Activated CD4-positive, alpha-beta T cell treated with anti-CD3 and anti-CD28 coated beads, Interleukin-2, amount 10 ng/mL, durations not matched to agents 24 days and 14 days (primary cell): ENCODE measurements at regions of chr12 and their contacts with region 1.

Region 1: GRCh38 chr12:121351820-121352681 is at the start of gene ANAPC5:
- DNase-seq: peak; percentile 97
- H3K4me3 Mint-ChIP-seq: peak within 1 kb of the TSS; percentile 96
- H3K27ac Mint-ChIP-seq: peak within 1 kb of the TSS; percentile 98
- H3K4me1 Mint-ChIP-seq: peaks cover 24% of the 10 kb centered on the region
- H3K27me3 Mint-ChIP-seq: peaks cover 3% of the 10 kb centered on the region
- total RNA-seq, gene ANAPC5: 151 and 154 TPM in 2 replicates

Region 2: GRCh38 chr12:121296618-121297434 is 55.2 kb before region 1 on chr12 and contains the start of gene CAMKK2:
- intact Hi-C with region 1: loop called (anchors 2 kb)
- DNase-seq: peak; percentile 98
- H3K4me3 Mint-ChIP-seq: peak within 1 kb of the TSS; percentile 93
- H3K27ac Mint-ChIP-seq: peak within 1 kb of the TSS; percentile 87
- H3K4me1 Mint-ChIP-seq: peaks cover 22% of the 10 kb centered on the region
- H3K27me3 Mint-ChIP-seq: no peaks in the 10 kb centered on the region
- total RNA-seq, gene CAMKK2: 37.4 and 38.2 TPM in 2 replicates

Region 3: GRCh38 chr12:121399391-121400331 is 47.6 kb after region 1 on chr12 and contains the start of gene RNF34:
- intact Hi-C with region 1: loop called (anchors 1 kb)
- DNase-seq: peak; percentile 99
- H3K4me3 Mint-ChIP-seq: peak within 1 kb of the TSS; percentile 95
- H3K27ac Mint-ChIP-seq: peak within 1 kb of the TSS; percentile 98
- H3K4me1 Mint-ChIP-seq: peaks cover 24% of the 10 kb centered on the region
- H3K27me3 Mint-ChIP-seq: no peaks in the 10 kb centered on the region
- total RNA-seq, gene RNF34: 79.5 and 84.1 TPM in 2 replicates

Region 4: DNA sequence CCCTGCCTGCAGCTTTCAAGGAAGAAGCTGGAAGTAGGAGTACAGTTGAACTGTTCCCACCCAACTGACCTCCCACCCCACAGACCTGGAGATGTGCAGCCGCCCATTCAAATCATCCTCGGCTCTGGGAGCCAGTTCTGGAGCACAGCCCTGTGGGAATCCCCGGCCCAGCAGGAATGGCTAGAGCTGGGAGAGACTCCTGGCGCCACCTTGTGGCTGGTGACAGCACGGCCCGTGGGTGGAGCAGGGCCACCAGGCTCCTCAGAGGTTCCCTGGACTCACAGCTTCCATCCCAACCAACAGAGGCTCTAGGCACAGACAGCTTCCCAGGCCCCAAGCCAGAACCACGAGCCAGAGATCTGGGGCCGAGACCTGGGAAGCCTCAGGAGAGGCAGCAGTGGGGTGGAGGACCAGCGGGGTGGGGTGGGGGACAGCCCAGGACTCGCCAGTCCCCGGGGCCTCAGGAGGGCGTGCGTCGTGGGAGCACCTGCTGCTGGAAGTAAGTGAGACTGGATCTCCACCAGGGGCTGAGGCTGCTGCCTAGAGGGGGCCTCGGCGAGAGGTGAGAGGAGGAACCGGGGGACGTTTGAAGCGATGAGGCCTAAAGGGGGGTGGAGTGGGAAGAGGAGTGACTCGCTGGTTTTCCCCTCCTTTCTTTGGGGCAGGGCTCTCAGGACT is 91.3 kb after region 1 on chr12:
- intact Hi-C with region 1: loop called (anchors 5 kb)
- DNase-seq: peak; percentile 89
- H3K4me3 Mint-ChIP-seq: no peak overlapping the region
- H3K27ac Mint-ChIP-seq: peak overlapping the region; percentile 53
- H3K4me1 Mint-ChIP-seq: peaks cover 4% of the 10 kb centered on the region
- H3K27me3 Mint-ChIP-seq: no peaks in the 10 kb centered on the region

Region 5: GRCh38 chr12:121467115-121467793 is 115.2 kb after region 1 on chr12:
- intact Hi-C with region 1: loop called (anchors 2 kb)
- DNase-seq: peak; percentile 97
- H3K4me3 Mint-ChIP-seq: peak overlapping the region; percentile 56
- H3K27ac Mint-ChIP-seq: peak overlapping the region; percentile 29
- H3K4me1 Mint-ChIP-seq: peaks cover 18% of the 10 kb centered on the region
- H3K27me3 Mint-ChIP-seq: no peaks in the 10 kb centered on the region